ENCODE measurements at regions of chr20 and their contacts with region 1.

Region 1: GRCh38 chr20:34834459-34834893 is 9.0 kb upstream of the NCOA6 start:
- DNase-seq: no peak
- ATAC-seq: peak in 3 of 4 donors; percentile 46 to 81 (median 66)
- H3K4me3 ChIP-seq: no peak overlapping the region
- H3K27ac ChIP-seq: no peak overlapping the region
- H3K4me1 ChIP-seq: no peaks in the 10 kb centered on the region
- H3K27me3 ChIP-seq: no peaks in the 10 kb centered on the region
- CTCF ChIP-seq: peak; percentile 44

Region 2: GRCh38 chr20:34876162-34877001 is 41.9 kb after region 1 on chr20 and contains the start of gene ACSS2:
- intact Hi-C with region 1: loop called (anchors 5 kb)
- DNase-seq: peak; percentile 99
- ATAC-seq: peak; percentile 84 to 90 (median 87)
- H3K4me3 ChIP-seq: peak within 1 kb of the TSS; percentile 97
- H3K27ac ChIP-seq: peak within 1 kb of the TSS; percentile 96
- H3K4me1 ChIP-seq: peaks cover 39% of the 10 kb centered on the region
- H3K27me3 ChIP-seq: no peaks in the 10 kb centered on the region
- CTCF ChIP-seq: no peak
- total RNA-seq, gene ACSS2: 106 to 161 (median 115) TPM

Region 3: DNA sequence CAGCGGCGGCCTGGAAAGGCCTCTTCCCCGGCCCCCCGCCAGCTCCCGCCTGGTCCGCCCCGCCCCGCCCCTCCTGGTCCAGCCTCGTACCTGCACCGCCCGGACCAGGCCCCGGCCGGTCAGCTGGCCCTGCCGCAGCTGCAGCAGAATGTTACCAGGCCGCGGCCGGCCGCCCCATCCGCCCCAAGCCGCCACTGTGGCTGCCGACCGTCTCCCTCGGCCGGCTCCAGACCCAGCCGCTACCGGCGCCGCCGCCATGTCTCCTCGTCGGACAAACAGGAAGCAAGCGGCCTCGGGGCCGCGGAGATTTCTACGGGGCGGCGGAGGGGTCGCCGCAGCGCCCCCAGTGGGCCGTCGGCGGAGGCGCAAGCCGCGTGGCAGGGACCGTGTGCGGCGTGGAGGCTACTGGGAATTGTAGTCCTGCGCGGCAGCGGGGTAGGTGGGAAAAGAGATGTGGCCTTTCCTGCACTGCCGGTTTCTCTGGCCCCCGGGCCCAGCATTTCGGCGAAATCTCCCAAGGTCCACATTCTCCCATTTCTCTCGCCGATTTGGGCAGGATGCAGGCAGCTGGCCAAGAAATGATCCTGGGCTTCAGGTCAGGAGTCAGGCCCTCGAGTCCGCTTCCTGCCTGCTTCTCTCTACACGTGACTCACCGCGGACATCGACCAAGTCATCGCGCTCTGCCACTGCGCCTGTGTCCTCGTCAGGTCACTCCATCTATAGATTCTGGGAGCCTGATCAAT is 258.2 kb after region 1 on chr20 and contains the start of gene TRPC4AP:
- intact Hi-C with region 1: loop called in 1 of 2 experiments (anchors 5 kb)
- DNase-seq: peak; percentile 90 to 95
- ATAC-seq: peak; percentile 95 to 98 (median 96)
- H3K4me3 ChIP-seq: peak within 1 kb of the TSS; percentile 82
- H3K27ac ChIP-seq: peak within 1 kb of the TSS; percentile 96
- H3K4me1 ChIP-seq: peaks cover 38% of the 10 kb centered on the region
- H3K27me3 ChIP-seq: no peaks in the 10 kb centered on the region
- CTCF ChIP-seq: peak; percentile 90
- total RNA-seq, gene TRPC4AP: 36.0 to 62.3 (median 58.1) TPM

Region 4: GRCh38 chr20:35207950-35208611 is 373.6 kb after region 1 on chr20:
- intact Hi-C with region 1: loop called (anchors 5 to 10 kb)
- DNase-seq: peak; percentile 78 to 84
- ATAC-seq: peak; percentile 80 to 99 (median 94)
- H3K4me3 ChIP-seq: peak overlapping the region; percentile 30
- H3K27ac ChIP-seq: peak overlapping the region; percentile 65
- H3K4me1 ChIP-seq: peaks cover 6% of the 10 kb centered on the region
- H3K27me3 ChIP-seq: no peaks in the 10 kb centered on the region
- CTCF ChIP-seq: peak; percentile 77

Region 5: GRCh38 chr20:35215066-35215956 is 380.8 kb after region 1 on chr20:
- intact Hi-C with region 1: loop called in 1 of 2 experiments (anchors 10 kb)
- DNase-seq: no peak
- ATAC-seq: no peak
- H3K4me3 ChIP-seq: no peak overlapping the region
- H3K27ac ChIP-seq: no peak overlapping the region
- H3K4me1 ChIP-seq: no peaks in the 10 kb centered on the region
- H3K27me3 ChIP-seq: no peaks in the 10 kb centered on the region
- CTCF ChIP-seq: no peak

Region 6: DNA sequence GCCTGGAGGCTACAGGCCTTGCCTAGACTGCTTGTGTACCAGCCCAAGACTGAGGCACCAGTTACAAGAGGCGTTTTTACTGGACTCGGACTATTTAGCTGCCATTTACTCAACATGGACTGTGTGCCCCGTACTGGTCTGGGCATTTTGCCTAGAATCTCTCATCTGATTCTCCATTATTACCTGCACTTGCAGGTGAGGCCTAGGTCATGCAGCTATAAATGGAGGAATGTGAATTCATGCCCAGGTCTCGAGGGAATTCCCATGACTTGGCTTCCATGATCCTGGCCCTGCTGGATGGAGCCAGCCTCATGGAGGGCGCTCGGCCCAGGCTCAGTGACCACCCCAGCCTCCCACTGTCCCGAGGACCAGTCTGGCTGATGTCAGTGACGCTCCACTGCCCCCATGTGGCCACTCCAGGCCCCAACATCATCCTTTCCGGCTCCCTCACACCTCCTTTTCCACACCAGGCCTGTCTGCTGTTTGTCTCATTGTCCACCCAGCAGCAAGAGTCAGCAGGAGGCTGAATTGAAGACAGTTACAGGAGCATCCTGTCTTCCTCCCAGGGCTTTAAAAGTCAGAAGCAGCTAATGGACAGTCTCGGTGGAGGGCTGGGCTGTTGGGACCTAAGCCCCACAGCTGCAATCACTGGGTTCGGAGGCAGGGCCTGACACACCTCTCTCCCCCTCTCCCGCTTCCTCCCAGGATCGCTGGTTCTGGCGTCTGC is 434.7 kb after region 1 on chr20:
- intact Hi-C with region 1: loop called (anchors 10 kb)
- DNase-seq: peak; percentile 66 to 76
- ATAC-seq: peak; percentile 72 to 83 (median 76)
- H3K4me3 ChIP-seq: no peak overlapping the region
- H3K27ac ChIP-seq: no peak overlapping the region
- H3K4me1 ChIP-seq: no peaks in the 10 kb centered on the region
- H3K27me3 ChIP-seq: no peaks in the 10 kb centered on the region
- CTCF ChIP-seq: peak; percentile 56

Region 7: DNA sequence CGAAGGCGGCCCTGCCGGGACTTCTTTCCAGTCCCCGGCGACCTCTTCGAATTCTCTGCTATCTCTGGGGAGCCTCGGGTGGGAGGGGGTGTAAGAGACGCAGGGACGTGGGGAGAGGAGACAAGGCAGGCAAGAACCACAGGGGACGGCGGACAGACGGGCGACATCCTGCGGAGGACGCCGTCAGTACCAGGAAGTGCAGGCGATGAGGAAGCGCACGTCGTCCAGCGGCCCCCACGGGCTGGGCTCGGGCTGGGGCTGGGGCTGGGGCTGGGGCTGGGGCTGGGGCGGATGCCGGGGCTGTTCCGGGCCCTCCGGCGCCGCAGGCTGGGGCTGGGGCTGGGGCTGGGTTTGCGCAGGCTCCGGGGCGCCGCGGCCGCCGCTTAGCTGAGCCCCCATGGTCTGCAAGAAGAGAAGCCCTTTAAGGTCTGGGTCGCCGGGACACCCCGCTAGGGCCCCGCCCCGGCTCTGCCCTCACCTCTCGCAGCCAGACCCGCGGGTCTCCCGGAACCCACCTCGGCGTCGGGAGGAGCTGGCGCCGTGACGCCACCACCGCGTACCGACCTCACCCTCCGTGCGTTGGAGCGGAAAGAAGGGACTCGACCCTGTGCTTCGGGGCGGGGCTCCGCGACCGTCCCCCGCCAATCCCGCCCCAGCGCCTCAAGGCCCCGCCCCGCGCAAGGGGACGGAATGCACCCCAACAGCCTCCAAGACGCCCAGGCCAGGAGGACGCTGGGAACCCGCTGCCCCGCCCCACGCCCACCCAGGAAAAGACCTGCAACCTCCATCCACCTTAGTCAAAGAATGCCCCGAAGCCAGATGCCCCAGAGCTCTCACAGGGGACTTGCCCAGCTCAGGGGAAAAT is 443.3 kb after region 1 on chr20 and contains the start of gene MMP24OS:
- intact Hi-C with region 1: loop called in 1 of 2 experiments (anchors 10 kb)
- DNase-seq: peak; percentile 91 to 95
- ATAC-seq: peak; percentile 93 to 98 (median 96)
- H3K4me3 ChIP-seq: peak within 1 kb of the TSS; percentile 93
- H3K27ac ChIP-seq: peak within 1 kb of the TSS; percentile 97
- H3K4me1 ChIP-seq: peaks cover 8% of the 10 kb centered on the region
- H3K27me3 ChIP-seq: no peaks in the 10 kb centered on the region
- CTCF ChIP-seq: no peak
- total RNA-seq, gene MMP24OS: 25.1 to 40.6 (median 27.2) TPM